ENCODE measurements at regions of chr1 and their contacts with region 1.

Region 1: DNA sequence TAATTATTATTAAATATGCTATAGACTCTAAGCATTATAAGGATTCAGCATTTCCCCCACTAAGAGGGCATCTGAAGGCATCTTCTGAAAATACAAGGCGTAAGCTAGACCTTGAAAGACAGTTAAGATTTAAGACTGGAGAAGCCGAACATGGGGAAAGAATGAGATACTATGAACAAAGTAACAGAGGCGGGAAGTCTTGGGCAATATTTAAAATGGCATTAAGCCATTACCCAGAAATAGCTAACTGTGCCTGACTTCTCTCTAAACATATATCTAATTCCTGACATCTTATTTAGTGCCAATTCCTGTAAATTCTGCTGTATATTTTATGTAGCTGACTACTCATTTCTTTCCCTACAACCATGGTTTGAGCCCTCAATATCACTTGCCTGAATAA is 20.9 kb downstream of the DPH5 start:
- DNase-seq: no peak
- ATAC-seq: no peak
- H3K4me3 ChIP-seq: no peak overlapping the region
- H3K4me3 Mint-ChIP-seq: no peak overlapping the region
- H3K27ac ChIP-seq: peak overlapping the region in 1 of 2 donors; percentile 53
- H3K27ac Mint-ChIP-seq: no peak overlapping the region
- H3K4me1 ChIP-seq: peaks cover 10 to 18% of the 10 kb centered on the region in 2 donors
- H3K4me1 Mint-ChIP-seq: peaks cover 23% of the 10 kb centered on the region
- H3K27me3 ChIP-seq: no peaks in the 10 kb centered on the region
- H3K27me3 Mint-ChIP-seq: no peaks in the 10 kb centered on the region
- CTCF ChIP-seq: no peak

Region 2: GRCh38 chr1:100760511-100760910 is 244.2 kb before region 1 on chr1:
- CTCF ChIA-PET with region 1: no interaction called
- POLR2A ChIA-PET with region 1: no interaction called
- intact Hi-C with region 1: no loop called
- DNase-seq: no peak
- ATAC-seq: no peak
- H3K4me3 ChIP-seq: no peak overlapping the region
- H3K4me3 Mint-ChIP-seq: no peak overlapping the region
- H3K27ac ChIP-seq: no peak overlapping the region
- H3K27ac Mint-ChIP-seq: no peak overlapping the region
- H3K4me1 ChIP-seq: no peaks in the 10 kb centered on the region
- H3K4me1 Mint-ChIP-seq: no peaks in the 10 kb centered on the region
- H3K27me3 ChIP-seq: peaks cover 0 to 3% (median 0%) of the 10 kb centered on the region in 4 experiments
- H3K27me3 Mint-ChIP-seq: peaks cover 9% of the 10 kb centered on the region
- CTCF ChIP-seq: no peak

Region 3: DNA sequence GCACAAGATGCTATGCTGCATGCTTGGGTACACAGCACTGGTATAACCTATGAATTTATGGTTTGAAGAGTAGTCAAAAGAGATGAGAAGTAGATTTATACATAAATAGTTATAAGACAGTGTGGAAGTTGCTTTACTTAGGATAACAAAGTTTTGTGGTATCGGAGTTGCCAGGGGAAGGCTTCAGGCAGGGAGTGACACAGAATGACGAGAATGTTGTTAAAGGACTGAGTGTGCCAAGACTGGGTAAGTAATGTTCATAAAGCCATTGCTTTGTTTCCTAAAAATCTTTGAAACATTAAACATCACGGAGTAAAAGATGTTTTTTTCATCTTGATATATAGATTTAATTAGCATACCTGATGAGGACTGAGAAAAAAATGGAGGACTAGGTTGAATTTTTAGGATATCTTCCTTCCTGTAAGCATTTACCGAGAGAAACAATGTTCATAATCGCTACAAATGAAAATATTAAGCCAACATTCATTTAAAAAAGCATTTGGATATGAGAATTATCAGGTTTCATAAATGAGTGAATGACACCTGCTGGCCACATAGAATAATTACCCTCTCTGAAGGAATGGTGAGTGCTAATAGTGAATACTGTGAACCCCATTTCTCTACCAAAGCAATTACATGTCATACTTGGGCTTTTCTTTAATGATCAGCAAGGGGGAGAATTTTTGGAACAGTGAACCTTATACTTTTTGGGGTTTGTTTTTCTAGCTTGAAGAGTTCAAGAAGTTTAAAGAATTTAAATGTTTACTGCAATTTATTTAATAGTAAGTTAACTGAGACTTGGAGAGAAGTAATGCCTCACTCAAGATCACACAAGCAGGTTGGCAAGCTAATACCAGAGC is 138.4 kb before region 1 on chr1:
- CTCF ChIA-PET with region 1: no interaction called
- POLR2A ChIA-PET with region 1: no interaction called
- intact Hi-C with region 1: no loop called
- DNase-seq: peak; percentile 40
- ATAC-seq: no peak
- H3K4me3 ChIP-seq: no peak overlapping the region
- H3K4me3 Mint-ChIP-seq: no peak overlapping the region
- H3K27ac ChIP-seq: no peak overlapping the region
- H3K27ac Mint-ChIP-seq: no peak overlapping the region
- H3K4me1 ChIP-seq: no peaks in the 10 kb centered on the region
- H3K4me1 Mint-ChIP-seq: no peaks in the 10 kb centered on the region
- H3K27me3 ChIP-seq: peaks cover 0 to 6% (median 2%) of the 10 kb centered on the region in 4 experiments
- H3K27me3 Mint-ChIP-seq: no peaks in the 10 kb centered on the region
- CTCF ChIP-seq: peak; percentile 74

Region 4: GRCh38 chr1:100972185-100972584 is 32.5 kb before region 1 on chr1:
- CTCF ChIA-PET with region 1: interaction called, 5 read pairs
- POLR2A ChIA-PET with region 1: no interaction called
- intact Hi-C with region 1: loop called (anchors 5 kb)
- DNase-seq: no peak
- ATAC-seq: no peak
- H3K4me3 ChIP-seq: no peak overlapping the region
- H3K4me3 Mint-ChIP-seq: no peak overlapping the region
- H3K27ac ChIP-seq: peak overlapping the region in 1 of 2 donors; percentile 17
- H3K27ac Mint-ChIP-seq: no peak overlapping the region
- H3K4me1 ChIP-seq: peaks cover 15 to 18% of the 10 kb centered on the region in 2 donors
- H3K4me1 Mint-ChIP-seq: peaks cover 20% of the 10 kb centered on the region
- H3K27me3 ChIP-seq: no peaks in the 10 kb centered on the region
- H3K27me3 Mint-ChIP-seq: no peaks in the 10 kb centered on the region
- CTCF ChIP-seq: no peak

Region 5: DNA sequence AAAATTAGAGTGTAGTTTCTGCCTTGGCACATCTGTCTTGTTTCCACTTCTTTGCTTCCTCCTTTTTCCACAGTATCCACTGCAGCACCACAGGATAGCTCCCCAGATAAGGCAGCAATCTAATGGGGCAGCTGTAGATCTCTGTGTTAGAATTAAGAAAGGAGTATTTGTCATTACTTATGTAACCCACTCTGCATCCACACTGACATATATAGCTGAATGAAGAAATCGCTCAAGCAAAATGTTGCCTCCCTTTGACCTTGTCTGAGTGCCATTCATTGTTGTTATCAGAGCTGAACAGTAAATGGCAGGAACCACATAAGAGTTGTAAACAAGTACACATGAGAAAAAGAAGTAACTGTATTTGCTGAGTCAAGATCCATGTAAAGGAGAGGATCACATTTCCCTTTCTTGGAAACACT is 66.8 kb after region 1 on chr1:
- CTCF ChIA-PET with region 1: no interaction called
- POLR2A ChIA-PET with region 1: no interaction called
- intact Hi-C with region 1: no loop called
- DNase-seq: no peak
- ATAC-seq: no peak
- H3K4me3 ChIP-seq: no peak overlapping the region
- H3K4me3 Mint-ChIP-seq: no peak overlapping the region
- H3K27ac ChIP-seq: peak overlapping the region in 1 of 2 donors; percentile 50
- H3K27ac Mint-ChIP-seq: peak overlapping the region; percentile 58
- H3K4me1 ChIP-seq: peaks cover 15 to 24% of the 10 kb centered on the region in 2 donors
- H3K4me1 Mint-ChIP-seq: peaks cover 40% of the 10 kb centered on the region
- H3K27me3 ChIP-seq: no peaks in the 10 kb centered on the region
- H3K27me3 Mint-ChIP-seq: no peaks in the 10 kb centered on the region
- CTCF ChIP-seq: no peak

Region 6: DNA sequence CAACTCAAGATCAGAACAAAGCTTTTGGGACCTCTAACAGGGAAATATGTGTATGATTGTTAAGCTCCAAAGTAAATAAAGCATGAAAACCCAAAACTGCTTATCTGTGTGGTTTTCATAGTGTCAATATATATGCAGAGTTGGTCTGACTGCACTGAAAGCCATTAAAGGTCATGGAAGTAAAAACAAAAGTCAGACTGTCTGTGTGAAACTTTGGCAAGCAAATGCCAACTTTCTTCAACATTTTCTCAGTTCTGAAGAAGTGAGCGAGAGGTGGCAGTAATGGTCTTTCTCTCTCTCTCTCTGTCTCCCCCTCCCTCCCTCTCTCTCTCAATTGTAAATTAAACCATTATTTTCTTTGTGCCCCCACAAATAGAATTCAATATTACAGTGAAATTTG is 132.1 kb after region 1 on chr1:
- CTCF ChIA-PET with region 1: no interaction called
- POLR2A ChIA-PET with region 1: no interaction called
- intact Hi-C with region 1: no loop called
- DNase-seq: peak; percentile 54
- ATAC-seq: peak; percentile 70
- H3K4me3 ChIP-seq: no peak overlapping the region
- H3K4me3 Mint-ChIP-seq: peak overlapping the region; percentile 17
- H3K27ac ChIP-seq: peak overlapping the region; percentile 1 to 32
- H3K27ac Mint-ChIP-seq: peak overlapping the region; percentile 70
- H3K4me1 ChIP-seq: peaks cover 38 to 40% of the 10 kb centered on the region in 2 donors
- H3K4me1 Mint-ChIP-seq: peaks cover 49% of the 10 kb centered on the region
- H3K27me3 ChIP-seq: no peaks in the 10 kb centered on the region
- H3K27me3 Mint-ChIP-seq: no peaks in the 10 kb centered on the region
- CTCF ChIP-seq: no peak

Measured in B cell (primary cell).